Heart right ventricle (tissue), 16 donors: ENCODE measurements at regions of chr7 and their contacts with region 1.

Region 1: DNA sequence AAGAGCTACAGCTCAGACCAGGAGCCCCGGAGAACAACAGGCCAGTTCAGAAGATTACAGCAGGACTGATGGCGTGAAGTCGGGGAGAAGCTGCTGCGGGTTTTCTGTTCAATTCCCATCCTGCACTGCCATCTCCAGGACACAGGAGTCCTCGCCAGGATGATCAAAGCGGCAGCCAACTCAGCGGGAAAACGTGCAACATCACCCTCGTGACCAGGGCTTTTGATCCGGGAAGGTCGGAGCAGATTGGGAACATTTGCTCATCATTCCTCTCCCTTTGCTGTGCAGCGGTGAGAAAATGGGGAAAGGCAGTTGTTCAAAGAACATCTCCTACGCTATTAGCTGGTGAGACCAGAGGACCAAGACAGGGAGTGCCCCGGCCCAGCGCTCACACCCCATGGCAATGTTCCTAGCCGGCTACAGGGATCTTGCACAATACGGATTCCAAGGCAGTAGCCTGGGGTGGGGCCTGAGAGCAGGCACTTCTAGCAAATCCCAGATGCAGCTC is 50.4 kb upstream of the FOXK1 start:
- DNase-seq: peak; percentile 64 to 77
- ATAC-seq: peak; percentile 89 to 98 (median 94)
- H3K4me3 ChIP-seq: peak overlapping the region in 8 of 10 donors; percentile 17 to 44 (median 28)
- H3K27ac ChIP-seq: peak overlapping the region in 1 of 10 donors; percentile 17
- H3K4me1 ChIP-seq: peaks cover 0 to 13% (median 10%) of the 10 kb centered on the region in 9 donors
- H3K27me3 ChIP-seq: peaks cover 0 to 2% (median 0%) of the 10 kb centered on the region in 7 donors
- CTCF ChIP-seq: peak; percentile 37 to 79 (median 66)

Region 2: GRCh38 chr7:4610768-4611467 is 20.8 kb before region 1 on chr7:
- intact Hi-C with region 1: loop called in 6 of 10 experiments (anchors 1 to 2 kb)
- DNase-seq: peak in 1 of 2 donors; percentile 66
- ATAC-seq: peak; percentile 52 to 78 (median 68)
- H3K4me3 ChIP-seq: no peak overlapping the region
- H3K27ac ChIP-seq: no peak overlapping the region
- H3K4me1 ChIP-seq: peaks cover 0 to 23% (median 15%) of the 10 kb centered on the region in 9 donors
- H3K27me3 ChIP-seq: peaks cover 0 to 8% (median 0%) of the 10 kb centered on the region in 7 donors
- CTCF ChIP-seq: peak; percentile 57 to 89 (median 83)